ENCODE measurements at regions of chr2 and their contacts with region 1.

Region 1: GRCh38 chr2:152925547-152926327 is 207.3 kb downstream of the ARL6IP6 start:
- DNase-seq: peak; percentile 94
- H3K4me3 Mint-ChIP-seq: peak overlapping the region; percentile 23
- H3K27ac Mint-ChIP-seq: peak overlapping the region; percentile 23
- H3K4me1 Mint-ChIP-seq: peaks cover 30% of the 10 kb centered on the region
- H3K27me3 Mint-ChIP-seq: no peaks in the 10 kb centered on the region
- CTCF ChIP-seq: peak; percentile 92

Region 2: DNA sequence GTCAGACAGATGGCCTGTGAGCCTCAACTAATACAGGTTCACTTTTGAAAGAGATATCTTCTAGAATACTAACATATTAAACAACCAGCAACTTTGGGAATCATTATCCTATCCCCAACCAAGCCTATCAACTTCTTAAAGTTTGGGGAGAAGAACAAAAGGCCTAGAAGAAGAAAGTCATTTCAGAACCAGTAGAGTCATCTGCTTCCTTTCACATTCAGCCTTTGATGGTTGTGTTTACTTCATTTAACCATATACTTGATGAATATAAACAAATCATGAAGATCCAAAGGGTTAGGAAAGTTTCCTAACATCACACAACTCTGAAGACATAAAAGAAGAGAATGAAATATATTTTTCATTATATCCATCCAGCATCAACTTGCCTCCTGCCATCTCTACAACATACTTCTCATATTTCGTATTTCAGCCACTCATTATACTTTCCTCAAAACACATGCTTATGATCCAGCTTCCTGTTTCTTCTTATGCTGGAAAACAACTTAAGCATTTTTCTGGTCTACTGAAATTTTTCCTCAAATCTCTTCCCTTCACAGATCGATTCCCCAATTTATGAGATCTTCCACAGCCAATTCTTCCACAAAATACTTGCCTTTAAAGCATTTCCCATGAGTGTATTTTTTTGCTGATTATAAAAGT is 941.2 kb before region 1 on chr2:
- CTCF ChIA-PET with region 1: no interaction called
- POLR2A ChIA-PET with region 1: no interaction called
- intact Hi-C with region 1: no loop called
- DNase-seq: no peak
- H3K4me3 Mint-ChIP-seq: no peak overlapping the region
- H3K27ac Mint-ChIP-seq: no peak overlapping the region
- H3K4me1 Mint-ChIP-seq: no peaks in the 10 kb centered on the region
- H3K27me3 Mint-ChIP-seq: no peaks in the 10 kb centered on the region
- CTCF ChIP-seq: no peak

Region 3: GRCh38 chr2:152175458-152176325 is 750.0 kb before region 1 on chr2 and contains the start of gene STAM2:
- CTCF ChIA-PET with region 1: no interaction called
- POLR2A ChIA-PET with region 1: no interaction called
- intact Hi-C with region 1: loop called (anchors 10 kb)
- DNase-seq: peak; percentile 92
- H3K4me3 Mint-ChIP-seq: peak within 1 kb of the TSS; percentile 94
- H3K27ac Mint-ChIP-seq: peak within 1 kb of the TSS; percentile 100
- H3K4me1 Mint-ChIP-seq: peaks cover 16% of the 10 kb centered on the region
- H3K27me3 Mint-ChIP-seq: no peaks in the 10 kb centered on the region
- CTCF ChIP-seq: peak; percentile 97
- total RNA-seq, gene STAM2: 27.6 and 35.3 TPM in 2 replicates

Region 4: DNA sequence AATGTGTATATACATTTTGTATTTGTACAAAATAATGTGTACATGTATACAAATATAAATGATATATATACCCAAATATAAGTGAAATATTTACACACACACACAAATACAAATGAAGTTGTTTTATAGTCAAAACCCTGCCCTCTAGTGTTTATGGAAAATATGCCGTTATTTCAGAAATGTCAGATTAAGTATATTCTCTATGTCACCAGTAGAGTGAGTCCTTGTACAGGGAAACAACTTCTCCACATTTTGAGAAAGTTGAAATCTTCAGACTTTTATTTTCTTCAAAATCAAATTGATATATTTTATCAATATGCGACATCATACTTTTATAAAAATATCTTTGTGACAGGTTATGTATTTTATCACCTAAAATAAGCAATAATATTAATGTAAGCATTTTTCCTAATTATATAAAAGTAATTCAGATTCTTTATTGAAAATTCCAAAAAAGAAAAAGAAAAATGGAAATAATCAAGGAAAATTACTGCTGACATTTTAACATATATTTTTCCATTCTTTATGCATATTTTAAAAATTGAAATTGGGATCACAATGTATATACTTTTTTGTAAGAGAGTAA is 184.9 kb before region 1 on chr2:
- CTCF ChIA-PET with region 1: interaction called, 3 read pairs
- POLR2A ChIA-PET with region 1: no interaction called
- intact Hi-C with region 1: loop called (anchors 10 kb)
- DNase-seq: peak; percentile 63
- H3K4me3 Mint-ChIP-seq: no peak overlapping the region
- H3K27ac Mint-ChIP-seq: no peak overlapping the region
- H3K4me1 Mint-ChIP-seq: no peaks in the 10 kb centered on the region
- H3K27me3 Mint-ChIP-seq: no peaks in the 10 kb centered on the region
- CTCF ChIP-seq: peak; percentile 81

Region 5: GRCh38 chr2:152846697-152847470 is 78.9 kb before region 1 on chr2:
- CTCF ChIA-PET with region 1: no interaction called
- POLR2A ChIA-PET with region 1: no interaction called
- intact Hi-C with region 1: no loop called
- DNase-seq: no peak
- H3K4me3 Mint-ChIP-seq: no peak overlapping the region
- H3K27ac Mint-ChIP-seq: no peak overlapping the region
- H3K4me1 Mint-ChIP-seq: no peaks in the 10 kb centered on the region
- H3K27me3 Mint-ChIP-seq: no peaks in the 10 kb centered on the region
- CTCF ChIP-seq: no peak

Region 6: DNA sequence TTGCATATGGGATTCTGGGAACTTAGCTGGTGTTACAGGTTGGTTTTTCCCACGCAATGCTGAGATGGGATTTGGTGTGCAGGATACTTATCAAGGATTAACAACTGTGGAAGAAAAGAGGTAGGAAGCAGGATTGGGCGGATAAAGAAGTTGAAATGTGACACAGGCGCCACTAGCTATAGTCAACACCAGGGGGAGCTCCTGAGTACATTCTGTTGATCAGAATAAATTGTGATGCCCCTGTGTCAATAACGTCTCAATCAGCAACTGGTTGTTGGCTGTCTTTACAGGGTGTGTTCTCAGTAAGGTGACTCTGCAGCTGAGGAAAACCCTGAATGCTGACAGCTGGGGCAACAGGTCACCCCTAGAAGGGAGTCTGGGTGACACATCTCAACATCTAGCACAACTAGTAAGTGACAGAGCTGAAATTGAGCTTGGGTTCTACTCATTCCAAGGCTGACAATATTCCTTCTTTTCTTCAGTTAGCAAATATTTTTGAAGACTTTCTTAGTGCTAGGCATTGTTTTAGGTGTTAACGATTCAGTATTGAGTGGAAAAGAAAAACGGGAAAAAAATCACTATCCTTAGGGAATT is 64.3 kb before region 1 on chr2:
- CTCF ChIA-PET with region 1: interaction called, 17 read pairs
- POLR2A ChIA-PET with region 1: no interaction called
- intact Hi-C with region 1: loop called (anchors 2 kb)
- DNase-seq: peak; percentile 60
- H3K4me3 Mint-ChIP-seq: no peak overlapping the region
- H3K27ac Mint-ChIP-seq: no peak overlapping the region
- H3K4me1 Mint-ChIP-seq: no peaks in the 10 kb centered on the region
- H3K27me3 Mint-ChIP-seq: no peaks in the 10 kb centered on the region
- CTCF ChIP-seq: peak; percentile 61

Region 7: DNA sequence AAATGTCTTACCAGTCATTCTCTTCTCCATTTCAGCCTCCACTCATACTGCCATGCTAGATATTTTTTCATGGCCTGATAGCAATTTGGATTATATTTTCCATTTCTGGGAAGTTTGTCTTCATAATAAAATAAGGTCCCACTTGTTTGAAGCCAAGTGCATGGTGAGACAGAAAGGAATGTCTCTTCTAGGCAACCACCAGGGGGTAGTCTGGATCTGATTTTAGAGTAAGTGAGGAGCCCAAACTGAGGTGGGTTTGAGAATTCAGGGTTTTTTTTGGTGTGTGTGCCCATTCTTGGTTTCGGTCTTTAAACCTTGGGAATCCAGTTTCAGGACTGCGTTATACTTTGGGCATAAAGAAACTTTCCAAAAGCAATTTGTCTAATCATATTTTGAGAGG is 237.3 kb after region 1 on chr2:
- CTCF ChIA-PET with region 1: interaction called, 4 read pairs
- POLR2A ChIA-PET with region 1: interaction called, 3 read pairs
- intact Hi-C with region 1: loop called (anchors 5 kb)
- DNase-seq: peak; percentile 67
- H3K4me3 Mint-ChIP-seq: no peak overlapping the region
- H3K27ac Mint-ChIP-seq: no peak overlapping the region
- H3K4me1 Mint-ChIP-seq: peaks cover 10% of the 10 kb centered on the region
- H3K27me3 Mint-ChIP-seq: peaks cover 35% of the 10 kb centered on the region
- CTCF ChIP-seq: peak; percentile 61

Region 8: DNA sequence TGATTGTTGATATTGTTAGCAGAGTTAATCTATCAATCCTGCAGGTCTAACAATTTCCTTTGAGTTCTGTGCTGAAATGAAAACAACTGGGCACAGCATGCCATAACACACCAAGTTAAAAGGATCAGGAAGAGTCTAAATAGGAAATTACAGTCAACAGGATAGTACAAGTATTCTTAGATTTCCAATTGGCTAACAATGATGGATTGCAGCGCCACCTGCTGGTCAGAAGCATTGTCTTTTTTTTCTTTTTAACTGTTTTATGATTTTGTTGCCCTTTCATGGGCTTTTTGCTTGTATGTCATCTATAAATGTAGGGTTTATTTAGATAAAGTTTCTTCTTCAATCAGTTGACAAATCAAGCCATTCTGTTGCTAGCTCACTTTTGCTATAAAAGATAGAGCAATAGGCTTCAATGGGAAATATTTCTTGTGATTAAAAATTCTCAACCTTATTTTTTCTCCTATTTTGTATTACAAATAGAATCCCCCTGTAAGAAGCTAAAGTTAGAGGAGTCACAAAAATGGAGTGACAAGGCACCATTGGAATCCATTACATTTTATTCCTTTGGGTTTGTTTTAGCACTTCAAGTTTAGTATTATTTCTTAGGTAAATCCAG is 593.6 kb after region 1 on chr2:
- CTCF ChIA-PET with region 1: interaction called, 10 read pairs
- POLR2A ChIA-PET with region 1: no interaction called
- intact Hi-C with region 1: loop called (anchors 2 kb)
- DNase-seq: peak; percentile 70
- H3K4me3 Mint-ChIP-seq: no peak overlapping the region
- H3K27ac Mint-ChIP-seq: no peak overlapping the region
- H3K4me1 Mint-ChIP-seq: no peaks in the 10 kb centered on the region
- H3K27me3 Mint-ChIP-seq: peaks cover 33% of the 10 kb centered on the region
- CTCF ChIP-seq: peak; percentile 73

Region 9: GRCh38 chr2:153811516-153811915 is 885.8 kb after region 1 on chr2:
- CTCF ChIA-PET with region 1: no interaction called
- POLR2A ChIA-PET with region 1: no interaction called
- intact Hi-C with region 1: no loop called
- DNase-seq: no peak
- H3K4me3 Mint-ChIP-seq: no peak overlapping the region
- H3K27ac Mint-ChIP-seq: no peak overlapping the region
- H3K4me1 Mint-ChIP-seq: no peaks in the 10 kb centered on the region
- H3K27me3 Mint-ChIP-seq: peaks cover 18% of the 10 kb centered on the region
- CTCF ChIP-seq: no peak